H1 (cell line): ENCODE measurements at regions of chr2 and their contacts with region 1.

Region 1: DNA sequence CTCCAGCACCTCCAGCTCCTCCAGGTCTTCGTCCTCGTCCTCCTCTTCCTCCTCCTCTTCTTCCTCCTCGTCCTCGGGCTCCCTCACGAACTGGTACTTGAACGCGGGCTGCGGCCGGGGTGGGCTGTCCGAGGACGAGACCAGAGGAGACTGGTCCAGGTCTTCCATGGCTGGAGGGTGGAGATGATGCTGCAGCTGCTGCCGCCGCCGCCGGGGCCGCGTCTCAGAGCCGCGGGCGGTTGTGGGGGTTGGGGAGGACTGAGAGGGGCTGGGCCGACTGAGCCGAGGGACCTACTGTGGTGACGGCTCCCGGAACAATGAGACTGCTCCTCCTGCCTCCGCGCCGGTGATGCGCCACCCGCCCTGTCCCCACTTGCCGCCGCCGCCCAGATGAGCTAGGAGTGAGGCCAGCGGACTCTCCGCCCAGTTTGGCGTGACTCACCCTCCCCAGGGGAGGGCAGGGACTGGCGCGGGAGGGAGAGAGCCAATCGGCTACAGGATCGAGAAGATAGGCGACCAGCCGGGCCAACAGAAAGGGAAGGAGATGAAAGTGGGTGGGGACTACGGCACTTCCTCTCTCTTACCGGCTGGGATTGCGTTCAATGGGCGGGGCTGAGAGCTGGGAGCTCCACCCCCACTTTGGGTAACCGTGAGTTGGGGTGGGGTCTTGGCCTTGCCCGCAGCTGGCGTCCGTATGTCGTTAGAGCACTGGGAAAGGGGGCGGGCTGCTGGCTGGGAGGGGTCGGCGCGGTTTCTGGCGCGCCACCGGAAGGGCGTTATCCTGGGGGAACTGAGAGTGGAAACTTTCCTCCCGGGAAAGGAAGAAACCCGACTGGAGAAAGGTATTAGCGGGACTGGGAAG is at the start of gene RTN4:
- DNase-seq: peak; percentile 97 to 99
- H3K4me3 ChIP-seq: peak within 1 kb of the TSS; percentile 82 to 100 (median 94)
- H3K27ac ChIP-seq: peak within 1 kb of the TSS; percentile 98
- H3K4me1 ChIP-seq: peaks cover 0 to 10% (median 5%) of the 10 kb centered on the region in 4 experiments; a peak in 3 of 7 replicates
- H3K27me3 ChIP-seq: no peaks in the 10 kb centered on the region
- CTCF ChIP-seq: no peak
- EP300 ChIP-seq: peak in 1 of 2 experiments; percentile 57; a peak in 1 of 3 replicates
- POLR2A ChIP-seq: peak; percentile 95 to 97
- RAD21 ChIP-seq: no peak
- total RNA-seq, gene RTN4: 240 and 242 TPM in 2 replicates

Region 2: DNA sequence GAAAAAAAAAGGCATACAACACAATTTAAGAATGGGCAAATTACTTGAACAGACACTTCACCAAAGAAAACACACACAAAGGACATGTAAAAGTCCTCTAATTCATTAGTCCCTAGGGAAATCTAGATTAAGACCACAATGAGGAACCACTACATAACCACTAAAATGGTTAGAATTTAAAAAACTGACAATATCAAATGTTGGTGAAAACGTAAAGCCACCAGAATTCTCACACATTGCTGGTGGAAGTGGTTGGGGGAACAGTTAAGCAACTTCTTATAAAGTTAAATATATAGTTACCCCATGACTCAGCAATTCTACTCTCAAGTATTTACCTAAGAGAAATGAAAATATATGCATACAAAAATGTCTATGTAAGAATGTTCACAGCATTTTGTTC is 11.9 kb before region 1 on chr2:
- CTCF ChIA-PET with region 1: interaction called, 3 read pairs
- POLR2A ChIA-PET with region 1: interaction called, 14 read pairs
- DNase-seq: no peak
- H3K4me3 ChIP-seq: no peak overlapping the region
- H3K27ac ChIP-seq: no peak overlapping the region
- H3K4me1 ChIP-seq: peaks cover 0 to 3% (median 0%) of the 10 kb centered on the region in 4 experiments; a peak in 2 of 7 replicates
- H3K27me3 ChIP-seq: no peaks in the 10 kb centered on the region
- CTCF ChIP-seq: no peak
- EP300 ChIP-seq: no peak
- POLR2A ChIP-seq: no peak
- RAD21 ChIP-seq: no peak

Region 3: DNA sequence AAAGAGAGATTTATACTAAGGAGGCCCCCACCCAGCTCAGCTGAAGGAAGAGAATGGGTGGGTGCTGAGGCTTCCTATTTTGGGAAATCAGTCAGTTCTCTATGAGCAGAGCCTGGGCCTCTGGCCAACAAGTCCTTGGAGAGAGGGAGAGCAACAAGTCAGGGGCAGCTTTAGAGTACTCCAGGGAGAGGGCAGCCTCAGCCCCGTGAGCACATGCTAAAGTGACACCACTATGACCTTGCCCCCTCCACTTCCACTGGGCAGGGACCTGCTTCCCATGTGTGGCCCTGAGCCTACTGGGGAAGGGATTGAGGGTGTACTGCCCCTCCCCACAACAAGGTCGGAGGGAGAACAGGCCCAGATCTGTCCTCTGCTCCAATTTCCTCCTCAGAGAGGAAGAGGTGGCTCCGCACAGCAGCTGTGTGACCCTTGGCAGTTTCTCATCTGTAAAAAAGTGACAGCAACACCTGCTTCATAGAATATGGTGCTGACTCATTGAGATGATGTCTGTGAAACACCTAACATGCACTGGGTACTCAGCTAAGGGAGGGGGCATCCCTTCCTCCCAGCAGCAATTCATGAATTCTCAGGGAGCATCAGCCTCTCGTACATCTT is 108.8 kb after region 1 on chr2:
- CTCF ChIA-PET with region 1: interaction called, 5 read pairs
- POLR2A ChIA-PET with region 1: interaction called, 10 read pairs
- DNase-seq: no peak
- H3K4me3 ChIP-seq: no peak overlapping the region
- H3K27ac ChIP-seq: no peak overlapping the region
- H3K4me1 ChIP-seq: peaks cover 0 to 18% (median 8%) of the 10 kb centered on the region in 4 experiments; a peak in 4 of 7 replicates
- H3K27me3 ChIP-seq: no peaks in the 10 kb centered on the region
- CTCF ChIP-seq: no peak
- EP300 ChIP-seq: no peak
- POLR2A ChIP-seq: no peak
- RAD21 ChIP-seq: no peak